ENCODE measurements at regions of chr20 and their contacts with region 1.

Region 1: GRCh38 chr20:17682103-17682888 is at the start of gene RRBP1:
- DNase-seq: peak; percentile 98
- ATAC-seq: peak; percentile 76 to 83
- H3K4me3 ChIP-seq: peak within 1 kb of the TSS; percentile 68 to 80 (median 76)
- H3K27ac ChIP-seq: peak within 1 kb of the TSS; percentile 82 to 86 (median 84)
- H3K4me1 ChIP-seq: peaks cover 7 to 13% of the 10 kb centered on the region in 2 donors
- H3K27me3 ChIP-seq: no peaks in the 10 kb centered on the region
- CTCF ChIP-seq: peak; percentile 60 to 76 (median 66)
- POLR2A ChIP-seq: peak; percentile 80 to 93
- total RNA-seq, gene RRBP1: 14.1 to 22.7 (median 17.9) TPM

Region 2: DNA sequence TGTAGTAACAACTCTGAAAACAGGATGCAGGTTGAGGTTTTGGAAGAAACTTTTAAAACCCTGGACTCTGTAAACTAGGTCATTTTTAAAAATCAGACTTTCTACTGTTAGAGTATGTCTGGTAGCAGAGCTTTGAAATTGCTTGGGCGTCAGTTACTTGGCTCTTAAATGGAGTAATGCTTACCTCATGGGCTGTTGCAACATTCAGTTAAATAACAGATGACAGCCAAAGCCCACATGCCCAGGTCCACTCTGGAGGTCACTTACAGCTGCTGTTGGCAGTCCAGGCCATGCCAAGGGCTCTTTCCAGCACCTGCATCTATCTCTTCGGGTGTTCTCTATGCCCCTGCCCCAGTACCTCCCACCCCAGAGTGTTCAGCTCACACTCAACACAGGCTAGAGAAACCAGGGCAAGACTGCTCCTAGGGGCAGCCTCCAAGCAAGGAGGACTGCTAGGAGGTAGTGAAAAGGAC is 113.8 kb after region 1 on chr20:
- in situ Hi-C with region 1: loop called in 1 of 4 experiments (anchors 25 kb)
- intact Hi-C with region 1: loop called (anchors 5 kb)
- DNase-seq: peak; percentile 19 to 59
- ATAC-seq: peak; percentile 86 to 97
- H3K4me3 ChIP-seq: no peak overlapping the region
- H3K27ac ChIP-seq: peak overlapping the region; percentile 19 to 60 (median 42)
- H3K4me1 ChIP-seq: peaks cover 10 to 11% of the 10 kb centered on the region in 2 donors
- H3K27me3 ChIP-seq: no peaks in the 10 kb centered on the region
- CTCF ChIP-seq: no peak
- POLR2A ChIP-seq: no peak

Region 3: DNA sequence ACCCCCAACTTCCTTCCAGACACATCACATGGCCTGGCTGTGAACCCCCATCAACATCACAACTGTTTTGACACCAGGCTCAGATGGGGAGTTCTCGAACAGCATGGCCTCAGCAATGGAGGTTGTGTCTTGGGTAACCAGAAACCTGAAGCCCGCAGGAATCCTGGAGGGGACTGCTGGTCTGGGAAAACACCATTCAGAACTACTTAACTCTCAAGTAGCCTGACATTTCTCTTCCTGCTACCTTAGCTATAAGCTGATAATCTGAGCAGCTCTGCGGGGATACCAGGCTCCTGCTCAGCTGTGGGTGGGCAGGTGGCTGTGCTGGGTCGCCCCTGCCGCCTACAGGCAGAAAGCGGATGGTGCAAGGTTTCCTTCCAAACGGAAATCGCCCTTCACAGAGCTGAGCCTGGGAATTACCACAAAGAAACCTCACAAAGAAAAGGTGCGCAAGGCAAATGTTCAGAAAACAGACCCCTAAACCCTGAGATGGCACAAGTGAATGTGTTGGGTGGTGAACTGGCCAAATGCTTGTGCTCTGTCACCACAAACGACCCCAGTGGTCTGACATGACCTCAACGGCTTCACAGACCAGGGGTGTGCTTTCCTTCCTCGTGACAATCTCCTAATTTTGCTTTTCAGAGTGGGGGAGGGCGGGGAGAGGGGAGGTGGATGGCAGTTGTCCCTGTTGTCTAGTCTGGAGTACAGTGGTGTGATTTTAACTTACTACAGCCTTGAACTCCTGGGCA is 256.7 kb after region 1 on chr20:
- in situ Hi-C with region 1: loop called in 1 of 4 experiments (anchors 25 kb)
- intact Hi-C with region 1: loop called (anchors 1 kb)
- DNase-seq: peak in 1 of 2 donors; percentile 56
- ATAC-seq: peak; percentile 54 to 68
- H3K4me3 ChIP-seq: no peak overlapping the region
- H3K27ac ChIP-seq: peak overlapping the region; percentile 16 to 62 (median 26)
- H3K4me1 ChIP-seq: peaks cover 30 to 44% of the 10 kb centered on the region in 2 donors
- H3K27me3 ChIP-seq: no peaks in the 10 kb centered on the region
- CTCF ChIP-seq: peak; percentile 79 to 88 (median 83)
- POLR2A ChIP-seq: no peak

Region 4: DNA sequence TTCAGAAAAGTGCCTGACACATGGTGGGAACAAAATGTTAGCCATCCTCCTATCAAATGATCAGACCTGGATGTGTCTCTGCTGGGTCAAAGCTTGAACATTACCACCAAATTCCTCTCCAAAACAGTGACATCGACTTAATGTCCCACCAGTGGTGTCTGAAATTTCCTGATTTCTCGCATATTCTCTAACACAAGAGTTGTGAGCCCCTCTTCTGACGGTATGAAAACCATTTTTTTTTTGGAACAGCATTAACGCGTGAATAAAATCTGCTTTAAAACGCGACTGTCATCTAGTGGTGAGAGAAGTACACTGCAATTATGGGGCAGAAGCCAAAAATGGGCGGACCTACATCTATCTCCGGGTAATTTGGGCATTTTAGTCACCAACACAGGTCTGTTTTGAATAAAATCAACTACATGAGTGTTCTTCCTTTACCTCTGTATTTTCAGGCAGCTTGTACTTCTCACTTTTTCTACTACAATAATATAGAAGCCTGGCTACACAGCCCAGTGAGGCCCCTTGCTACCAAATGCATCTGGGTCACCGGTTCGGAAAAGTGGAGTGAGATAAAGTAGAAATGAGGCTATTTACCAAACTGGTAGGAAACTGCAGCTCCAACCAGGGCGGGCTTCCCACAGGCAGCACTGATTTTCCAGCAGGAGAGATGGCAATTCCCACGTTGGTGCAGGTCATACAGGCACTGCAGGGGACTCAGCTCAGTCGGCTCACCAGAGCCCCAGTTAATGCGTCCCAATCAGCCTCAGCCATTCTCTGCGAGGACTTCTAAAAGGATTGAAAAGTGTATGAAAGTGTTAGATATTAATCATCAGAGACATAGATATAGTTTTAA is 313.9 kb after region 1 on chr20:
- in situ Hi-C with region 1: no loop called
- intact Hi-C with region 1: loop called (anchors 2 kb)
- DNase-seq: peak in 1 of 2 donors; percentile 18
- ATAC-seq: peak; percentile 61 to 72
- H3K4me3 ChIP-seq: peak overlapping the region in 1 of 4 donors; percentile 13
- H3K27ac ChIP-seq: no peak overlapping the region
- H3K4me1 ChIP-seq: peaks cover 0 to 4% of the 10 kb centered on the region in 2 donors
- H3K27me3 ChIP-seq: no peaks in the 10 kb centered on the region
- CTCF ChIP-seq: peak; percentile 86 to 99 (median 98)
- POLR2A ChIP-seq: no peak

Region 5: DNA sequence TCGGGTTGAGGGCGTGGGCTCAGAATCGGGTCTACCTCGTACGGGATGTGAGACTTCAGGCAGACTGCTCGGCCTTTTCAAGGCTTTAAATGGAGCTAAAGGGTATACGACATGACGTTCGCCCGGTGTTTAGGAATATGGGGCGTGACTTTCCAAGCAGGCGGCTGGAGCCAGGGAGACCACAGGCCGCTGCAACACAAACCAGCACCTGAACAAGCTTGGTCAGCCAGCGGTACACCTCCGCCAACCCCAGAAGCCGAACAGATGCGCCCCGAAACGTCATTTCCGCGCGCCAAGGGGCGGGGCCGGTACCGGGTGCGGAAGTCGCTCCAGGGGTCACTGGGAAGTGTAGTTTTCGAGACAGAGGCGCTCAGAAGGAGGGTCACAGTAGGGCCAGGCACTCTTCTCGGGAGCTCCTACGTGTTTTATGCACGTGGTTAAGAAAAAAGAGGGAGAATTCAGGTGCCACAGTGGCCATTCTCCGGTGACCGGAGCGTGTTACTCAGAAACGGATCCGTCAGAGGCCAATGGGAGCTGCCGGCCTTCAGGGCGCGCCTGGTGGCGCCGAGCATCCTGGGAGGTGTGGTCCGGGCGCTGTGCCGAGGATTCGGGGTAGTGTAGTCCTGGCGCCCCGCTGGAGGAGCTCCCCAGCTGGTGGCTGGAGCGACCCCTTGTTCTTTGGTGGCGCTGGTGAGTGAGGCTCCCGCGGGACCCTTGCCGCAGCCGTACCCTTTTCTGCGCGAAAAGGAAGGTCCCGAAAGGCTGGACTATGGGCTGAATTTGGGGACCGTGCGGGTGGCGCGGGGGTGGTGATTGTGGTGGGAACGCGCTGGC is 605.8 kb after region 1 on chr20 and contains the start of gene ZNF133:
- in situ Hi-C with region 1: loop called in 1 of 4 experiments (anchors 25 kb)
- intact Hi-C with region 1: no loop called
- DNase-seq: peak; percentile 93 to 95
- ATAC-seq: peak; percentile 99
- H3K4me3 ChIP-seq: peak within 1 kb of the TSS; percentile 75 to 100 (median 92)
- H3K27ac ChIP-seq: peak within 1 kb of the TSS; percentile 84 to 98 (median 96)
- H3K4me1 ChIP-seq: peaks cover 10 to 13% of the 10 kb centered on the region in 2 donors
- H3K27me3 ChIP-seq: peaks cover 0 to 18% (median 0%) of the 10 kb centered on the region in 3 donors
- CTCF ChIP-seq: no peak
- POLR2A ChIP-seq: peak; percentile 59 to 66
- total RNA-seq, gene ZNF133: 6.9 to 15.8 (median 11.0) TPM